ENCODE measurements at regions of chr15 and their contacts with region 1.

Region 1: GRCh38 chr15:92903941-92904831 is 4.1 kb downstream of the CHD2 start:
- DNase-seq: peak; percentile 96
- ATAC-seq: peak; percentile 90
- H3K4me3 ChIP-seq: peak overlapping the region; percentile 88 to 90 (median 89)
- H3K27ac ChIP-seq: peak overlapping the region; percentile 100
- H3K4me1 ChIP-seq: peaks cover 47% of the 10 kb centered on the region
- H3K27me3 ChIP-seq: no peaks in the 10 kb centered on the region; a peak in 1 of 5 replicates
- CTCF ChIP-seq: no peak; the same call in 1 of the 2 replicates
- EP300 ChIP-seq: peak in 1 of 2 experiments; percentile 54; a peak in 1 of 4 replicates
- POLR2A ChIP-seq: peak; percentile 85 to 99
- RAD21 ChIP-seq: peak; percentile 75

Region 2: DNA sequence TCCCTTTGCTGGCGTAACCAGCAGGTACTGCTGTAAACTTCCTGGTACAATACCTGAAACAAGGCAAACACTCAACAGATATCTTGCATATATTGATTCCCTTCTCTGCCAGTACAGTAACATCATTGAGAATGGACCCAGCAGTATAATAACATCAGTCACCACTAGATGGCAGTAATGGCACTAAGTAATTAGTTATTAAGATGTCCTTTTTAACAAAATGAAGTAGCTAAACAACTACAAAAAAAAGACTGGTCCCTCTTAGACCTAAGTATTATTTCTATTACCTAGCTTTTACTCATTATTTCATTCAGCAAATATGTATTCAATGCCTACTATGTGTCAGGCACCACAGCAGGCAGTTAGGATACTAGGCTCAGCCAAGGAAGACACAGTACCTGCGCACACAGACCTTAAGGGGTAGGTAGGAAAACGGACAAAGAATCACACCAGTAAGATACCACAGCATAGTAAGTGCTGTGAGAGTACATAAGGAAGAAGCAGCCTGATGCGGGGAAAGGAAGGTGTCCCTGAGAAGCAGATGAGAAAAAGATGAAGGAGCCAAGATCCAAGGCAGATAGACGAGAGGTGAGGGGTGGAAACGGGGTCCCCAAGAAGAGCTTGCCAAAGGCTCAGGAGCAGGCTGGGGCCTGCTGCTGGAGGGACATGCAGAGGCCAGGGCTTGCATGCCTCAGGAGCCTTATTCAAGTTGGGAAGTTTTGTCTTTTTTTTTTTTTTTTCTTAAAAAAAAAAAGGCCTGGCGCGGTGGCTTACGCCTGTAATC is 106.8 kb before region 1 on chr15:
- CTCF ChIA-PET with region 1: no interaction called
- POLR2A ChIA-PET with region 1: interaction called, 19 read pairs
- in situ Hi-C with region 1: no loop called
- intact Hi-C with region 1: no loop called
- DNase-seq: peak; percentile 78
- ATAC-seq: peak; percentile 27
- H3K4me3 ChIP-seq: peak overlapping the region in 2 of 3 experiments; percentile 46 to 65; a peak in 1 of 6 replicates
- H3K27ac ChIP-seq: peak overlapping the region; percentile 15
- H3K4me1 ChIP-seq: peaks cover 46% of the 10 kb centered on the region
- H3K27me3 ChIP-seq: no peaks in the 10 kb centered on the region
- CTCF ChIP-seq: peak; percentile 74
- EP300 ChIP-seq: no peak
- POLR2A ChIP-seq: no peak
- RAD21 ChIP-seq: peak; percentile 27; the same call in 1 of the 2 replicates

Region 3: GRCh38 chr15:92803847-92804609 is 100.2 kb before region 1 on chr15:
- CTCF ChIA-PET with region 1: no interaction called
- POLR2A ChIA-PET with region 1: interaction called, 185 read pairs
- in situ Hi-C with region 1: no loop called
- intact Hi-C with region 1: loop called (anchors 1 kb)
- DNase-seq: peak; percentile 100
- ATAC-seq: peak; percentile 90
- H3K4me3 ChIP-seq: peak overlapping the region in 1 of 3 experiments; percentile 18; a peak in 2 of 6 replicates
- H3K27ac ChIP-seq: peak overlapping the region; percentile 90
- H3K4me1 ChIP-seq: peaks cover 63% of the 10 kb centered on the region
- H3K27me3 ChIP-seq: no peaks in the 10 kb centered on the region; a peak in 1 of 5 replicates
- CTCF ChIP-seq: no peak
- EP300 ChIP-seq: peak; percentile 94 to 97
- POLR2A ChIP-seq: peak; percentile 27 to 48; a peak in 2 of 4 replicates
- RAD21 ChIP-seq: no peak

Region 4: GRCh38 chr15:92820236-92821021 is 83.8 kb before region 1 on chr15:
- CTCF ChIA-PET with region 1: no interaction called
- POLR2A ChIA-PET with region 1: interaction called, 16 read pairs
- in situ Hi-C with region 1: no loop called
- intact Hi-C with region 1: no loop called
- DNase-seq: peak; percentile 84
- ATAC-seq: peak; percentile 92
- H3K4me3 ChIP-seq: peak overlapping the region; percentile 41 to 67 (median 65)
- H3K27ac ChIP-seq: peak overlapping the region; percentile 95
- H3K4me1 ChIP-seq: peaks cover 62% of the 10 kb centered on the region
- H3K27me3 ChIP-seq: no peaks in the 10 kb centered on the region
- CTCF ChIP-seq: no peak
- EP300 ChIP-seq: peak in 1 of 2 experiments; percentile 73; a peak in 1 of 4 replicates
- POLR2A ChIP-seq: peak; percentile 68 to 93
- RAD21 ChIP-seq: no peak

Region 5: DNA sequence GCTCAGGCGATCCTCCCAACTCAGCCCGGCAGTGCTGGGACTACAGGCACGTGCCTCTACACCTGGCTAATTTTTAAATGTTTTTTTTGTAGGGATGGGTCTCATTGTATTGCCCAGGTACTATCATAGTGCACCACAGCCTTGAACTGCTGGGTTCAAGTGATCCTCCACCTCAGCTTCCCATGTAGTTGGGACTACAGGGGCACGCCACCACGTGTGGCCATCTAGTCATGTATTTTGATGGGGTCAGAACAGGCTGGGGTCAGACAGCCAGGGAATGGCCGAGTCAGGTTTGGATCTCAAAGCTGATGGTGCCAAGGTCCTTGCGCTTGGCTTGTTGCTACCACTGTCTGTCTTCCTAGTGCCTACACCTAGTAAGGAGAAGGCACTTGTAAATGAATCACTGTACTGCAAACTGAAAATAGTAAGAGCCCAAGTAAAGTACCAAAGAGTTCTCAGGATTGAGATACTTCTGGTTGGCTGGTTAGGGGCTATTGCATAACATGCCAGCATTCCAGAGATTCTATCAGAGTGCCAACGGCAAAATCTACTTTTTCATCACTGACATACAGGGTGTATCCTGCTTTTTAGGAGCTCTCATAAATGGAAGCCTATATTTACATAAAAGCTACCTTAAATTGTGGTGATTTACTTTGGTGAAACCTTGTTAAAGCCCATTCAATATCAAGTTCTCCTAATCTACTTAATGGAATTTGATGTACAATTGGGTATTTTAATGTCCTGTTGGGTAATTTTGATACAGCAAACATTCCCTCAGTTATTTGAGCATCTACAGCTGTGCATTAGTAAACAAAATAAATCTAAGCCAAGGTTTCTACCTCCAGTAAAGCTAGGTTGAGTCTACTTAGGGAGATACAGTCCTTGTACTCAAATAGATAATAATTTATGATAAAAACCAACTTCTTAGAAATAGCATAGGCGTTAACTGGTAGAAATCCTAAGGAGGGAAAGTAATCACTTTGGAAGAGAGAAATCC is 34.9 kb before region 1 on chr15:
- CTCF ChIA-PET with region 1: no interaction called
- POLR2A ChIA-PET with region 1: no interaction called
- in situ Hi-C with region 1: no loop called
- intact Hi-C with region 1: no loop called
- DNase-seq: peak; percentile 25
- ATAC-seq: peak; percentile 31
- H3K4me3 ChIP-seq: peak overlapping the region in 2 of 3 experiments; percentile 22 to 45; a peak in 2 of 6 replicates
- H3K27ac ChIP-seq: no peak overlapping the region
- H3K4me1 ChIP-seq: peaks cover 45% of the 10 kb centered on the region
- H3K27me3 ChIP-seq: no peaks in the 10 kb centered on the region; a peak in 1 of 5 replicates
- CTCF ChIP-seq: no peak
- EP300 ChIP-seq: no peak
- POLR2A ChIP-seq: no peak
- RAD21 ChIP-seq: no peak

Region 6: DNA sequence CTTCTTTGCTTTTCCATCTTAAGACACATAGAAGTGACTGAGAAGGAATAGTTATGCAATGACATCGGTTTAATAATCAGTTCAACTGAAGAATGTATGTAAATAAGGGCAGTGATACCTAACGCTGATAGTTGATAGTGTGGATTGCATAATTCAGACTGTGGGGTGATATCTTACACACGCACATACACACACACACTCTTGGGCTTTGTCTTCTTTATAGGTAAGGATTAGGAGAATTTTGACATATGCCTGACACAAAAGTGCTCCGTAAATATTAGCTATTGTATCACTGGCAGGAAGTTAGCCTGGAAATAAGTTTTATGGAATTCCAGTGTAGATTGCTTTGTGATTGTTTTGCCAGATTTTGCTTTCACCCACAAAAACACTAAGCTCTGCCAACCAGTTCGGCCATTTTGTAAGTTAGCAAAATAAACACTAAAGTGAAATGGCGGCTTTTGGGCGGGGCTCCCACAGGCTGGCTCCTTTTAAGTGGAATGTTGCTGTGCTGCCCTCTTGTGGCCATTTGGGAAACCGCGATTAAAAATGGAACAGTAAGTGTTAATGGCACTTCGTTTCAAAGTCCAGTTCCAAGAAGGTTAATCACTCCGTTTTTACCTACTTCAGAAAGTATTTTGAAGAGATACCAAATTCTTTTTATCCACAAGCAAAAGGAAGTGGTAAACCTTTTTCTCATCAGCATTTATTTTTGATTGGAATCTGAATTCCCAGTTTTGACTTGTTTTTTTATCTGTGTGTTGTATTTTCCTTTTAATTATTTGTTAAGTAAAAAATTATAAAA is 13.6 kb after region 1 on chr15:
- CTCF ChIA-PET with region 1: no interaction called
- POLR2A ChIA-PET with region 1: interaction called, 23 read pairs
- in situ Hi-C with region 1: no loop called
- intact Hi-C with region 1: loop called (anchors 2 kb)
- DNase-seq: peak; percentile 87
- ATAC-seq: peak; percentile 39
- H3K4me3 ChIP-seq: no peak overlapping the region
- H3K27ac ChIP-seq: peak overlapping the region; percentile 60
- H3K4me1 ChIP-seq: peaks cover 98% of the 10 kb centered on the region
- H3K27me3 ChIP-seq: no peaks in the 10 kb centered on the region
- CTCF ChIP-seq: peak; percentile 84
- EP300 ChIP-seq: no peak
- POLR2A ChIP-seq: no peak
- RAD21 ChIP-seq: peak; percentile 81

Region 7: GRCh38 chr15:92968926-92969651 is 64.9 kb after region 1 on chr15:
- CTCF ChIA-PET with region 1: no interaction called
- POLR2A ChIA-PET with region 1: no interaction called
- in situ Hi-C with region 1: no loop called
- intact Hi-C with region 1: no loop called
- DNase-seq: no peak
- ATAC-seq: peak; percentile 69
- H3K4me3 ChIP-seq: no peak overlapping the region
- H3K27ac ChIP-seq: no peak overlapping the region
- H3K4me1 ChIP-seq: no peaks in the 10 kb centered on the region
- H3K27me3 ChIP-seq: no peaks in the 10 kb centered on the region
- CTCF ChIP-seq: no peak
- EP300 ChIP-seq: no peak
- POLR2A ChIP-seq: no peak
- RAD21 ChIP-seq: no peak

Measured in HepG2 (cell line).